GM12878 (cell line): ENCODE measurements at regions of chr11 and their contacts with region 1.

Region 1: GRCh38 chr11:44286268-44286880 is 23.6 kb downstream of the ALX4 start:
- DNase-seq: peak; percentile 2
- ATAC-seq: peak; percentile 91
- H3K4me3 ChIP-seq: no peak overlapping the region
- H3K27ac ChIP-seq: no peak overlapping the region
- H3K4me1 ChIP-seq: no peaks in the 10 kb centered on the region
- H3K27me3 ChIP-seq: no peaks in the 10 kb centered on the region; a peak in 1 of 4 replicates
- CTCF ChIP-seq: peak; percentile 83 to 99 (median 96); a peak in 5 of 6 replicates
- EP300 ChIP-seq: no peak
- POLR2A ChIP-seq: no peak
- RAD21 ChIP-seq: peak; percentile 96

Region 2: GRCh38 chr11:44110231-44110679 is 176.1 kb before region 1 on chr11:
- CTCF ChIA-PET with region 1: interaction called, 7 read pairs
- POLR2A ChIA-PET with region 1: no interaction called
- RAD21 ChIA-PET with region 1: no interaction called
- SMC1A ChIA-PET with region 1: interaction called, 4 read pairs
- in situ Hi-C with region 1: no loop called
- intact Hi-C with region 1: loop called (anchors 2 kb)
- DNase-seq: no peak
- ATAC-seq: peak; percentile 98
- H3K4me3 ChIP-seq: no peak overlapping the region
- H3K27ac ChIP-seq: 0 out of 2 replicates have a peak overlapping the region, but pooled peaks have one; percentile 22
- H3K4me1 ChIP-seq: peaks cover 8% of the 10 kb centered on the region
- H3K27me3 ChIP-seq: no peaks in the 10 kb centered on the region
- CTCF ChIP-seq: peak; percentile 85 to 94 (median 90)
- EP300 ChIP-seq: no peak
- POLR2A ChIP-seq: no peak
- RAD21 ChIP-seq: peak; percentile 90

Region 3: DNA sequence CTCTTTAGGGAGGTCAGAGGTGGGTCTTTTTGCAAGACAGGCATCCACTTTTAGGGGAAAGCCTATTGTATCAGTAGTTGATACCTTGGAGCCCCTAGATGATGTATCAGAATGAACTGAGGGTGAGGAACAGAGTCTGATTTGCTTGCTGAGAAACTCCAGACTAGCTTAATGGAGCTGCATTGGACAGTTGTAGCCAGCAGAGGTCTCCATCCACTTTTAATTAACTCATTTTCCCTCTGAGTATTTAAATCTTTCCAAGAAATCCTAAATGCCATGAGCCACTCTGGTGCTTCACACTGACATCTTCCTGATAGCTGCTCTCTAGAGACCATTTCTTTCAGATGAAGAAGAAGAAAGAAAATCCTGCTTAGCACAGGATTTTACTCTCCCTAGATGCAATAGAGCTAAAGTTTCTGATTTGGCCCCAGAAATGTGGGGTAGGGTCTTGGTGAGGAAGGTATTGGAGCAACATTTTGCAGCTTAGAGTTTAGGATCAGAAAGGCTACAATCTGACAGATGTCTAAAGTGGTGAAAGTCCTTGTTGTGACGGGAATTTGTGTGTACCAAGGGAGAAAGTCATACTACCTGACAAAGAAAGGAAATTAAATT is 152.9 kb before region 1 on chr11:
- CTCF ChIA-PET with region 1: interaction called, 11 read pairs
- POLR2A ChIA-PET with region 1: no interaction called
- RAD21 ChIA-PET with region 1: interaction called, 3 read pairs
- SMC1A ChIA-PET with region 1: interaction called, 8 read pairs
- in situ Hi-C with region 1: no loop called
- intact Hi-C with region 1: no loop called
- DNase-seq: no peak
- ATAC-seq: peak; percentile 55; the same call in 2 of the 3 replicates
- H3K4me3 ChIP-seq: no peak overlapping the region
- H3K27ac ChIP-seq: no peak overlapping the region
- H3K4me1 ChIP-seq: no peaks in the 10 kb centered on the region
- H3K27me3 ChIP-seq: no peaks in the 10 kb centered on the region
- CTCF ChIP-seq: peak; percentile 52 to 63 (median 59)
- EP300 ChIP-seq: no peak
- POLR2A ChIP-seq: no peak
- RAD21 ChIP-seq: peak; percentile 52

Region 4: GRCh38 chr11:44483919-44484610 is 197.7 kb after region 1 on chr11:
- CTCF ChIA-PET with region 1: no interaction called
- POLR2A ChIA-PET with region 1: no interaction called
- RAD21 ChIA-PET with region 1: no interaction called
- SMC1A ChIA-PET with region 1: no interaction called
- in situ Hi-C with region 1: no loop called
- intact Hi-C with region 1: loop called (anchors 5 kb)
- DNase-seq: no peak
- ATAC-seq: no peak
- H3K4me3 ChIP-seq: no peak overlapping the region
- H3K27ac ChIP-seq: no peak overlapping the region
- H3K4me1 ChIP-seq: no peaks in the 10 kb centered on the region
- H3K27me3 ChIP-seq: peaks cover 0 to 3% of the 10 kb centered on the region in 2 experiments; a peak in 3 of 4 replicates
- CTCF ChIP-seq: peak; percentile 9 to 26 (median 15); a peak in 2 of 6 replicates
- EP300 ChIP-seq: no peak
- POLR2A ChIP-seq: no peak
- RAD21 ChIP-seq: no peak

Region 5: DNA sequence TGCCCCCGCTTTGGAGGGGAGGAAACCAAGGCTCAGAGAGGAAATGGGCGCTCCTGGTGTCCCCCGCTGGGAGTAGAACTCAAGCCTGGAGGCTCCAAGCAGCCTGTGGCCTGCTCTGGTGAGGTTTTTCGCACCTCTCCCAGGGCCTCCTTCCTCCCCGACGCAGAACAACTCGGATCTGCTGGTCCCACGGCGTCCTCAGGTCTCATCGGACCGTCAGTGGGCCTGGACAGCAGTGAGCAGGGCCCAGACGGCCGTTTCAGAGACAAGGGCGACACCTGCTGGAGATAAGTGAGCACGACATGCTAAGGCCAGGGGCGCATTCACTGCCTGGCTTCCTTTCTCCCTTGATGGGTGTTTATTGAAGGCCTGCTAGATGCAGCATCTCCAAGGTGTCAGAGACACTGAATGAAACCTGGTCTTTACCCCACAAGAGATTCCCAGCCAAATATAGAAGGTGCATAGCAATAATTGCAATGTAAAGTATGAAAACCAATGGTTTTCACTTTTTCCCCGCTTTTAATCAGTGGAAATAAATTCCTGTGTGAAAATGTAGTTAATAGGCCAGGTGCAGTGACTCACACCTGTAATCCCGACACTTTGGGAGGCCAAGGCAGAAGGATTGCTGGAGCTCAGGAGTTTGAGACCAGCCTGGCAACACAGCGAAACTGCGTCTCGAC is 252.1 kb after region 1 on chr11:
- CTCF ChIA-PET with region 1: interaction called, 19 read pairs
- POLR2A ChIA-PET with region 1: no interaction called
- RAD21 ChIA-PET with region 1: interaction called, 10 read pairs
- SMC1A ChIA-PET with region 1: interaction called, 11 read pairs
- in situ Hi-C with region 1: loop called (anchors 5 kb)
- intact Hi-C with region 1: loop called (anchors 1 kb)
- DNase-seq: no peak
- ATAC-seq: peak; percentile 99
- H3K4me3 ChIP-seq: no peak overlapping the region
- H3K27ac ChIP-seq: no peak overlapping the region
- H3K4me1 ChIP-seq: no peaks in the 10 kb centered on the region
- H3K27me3 ChIP-seq: peaks cover 0 to 1% of the 10 kb centered on the region in 2 experiments; a peak in 3 of 4 replicates
- CTCF ChIP-seq: peak; percentile 94 to 96 (median 96); a peak in 5 of 6 replicates
- EP300 ChIP-seq: no peak
- POLR2A ChIP-seq: no peak
- RAD21 ChIP-seq: peak; percentile 90

Region 6: GRCh38 chr11:44911029-44911814 is 624.8 kb after region 1 on chr11:
- CTCF ChIA-PET with region 1: no interaction called
- POLR2A ChIA-PET with region 1: no interaction called
- RAD21 ChIA-PET with region 1: interaction called, 4 read pairs
- SMC1A ChIA-PET with region 1: no interaction called
- in situ Hi-C with region 1: no loop called
- intact Hi-C with region 1: loop called (anchors 10 kb)
- DNase-seq: no peak
- ATAC-seq: peak; percentile 95
- H3K4me3 ChIP-seq: no peak overlapping the region
- H3K27ac ChIP-seq: no peak overlapping the region
- H3K4me1 ChIP-seq: peaks cover 4% of the 10 kb centered on the region
- H3K27me3 ChIP-seq: no peaks in the 10 kb centered on the region; a peak in 1 of 4 replicates
- CTCF ChIP-seq: peak; percentile 68 to 77 (median 76)
- EP300 ChIP-seq: no peak
- POLR2A ChIP-seq: no peak
- RAD21 ChIP-seq: peak; percentile 83